ENCODE measurements at regions of chr11 and their contacts with region 1.

Region 1: DNA sequence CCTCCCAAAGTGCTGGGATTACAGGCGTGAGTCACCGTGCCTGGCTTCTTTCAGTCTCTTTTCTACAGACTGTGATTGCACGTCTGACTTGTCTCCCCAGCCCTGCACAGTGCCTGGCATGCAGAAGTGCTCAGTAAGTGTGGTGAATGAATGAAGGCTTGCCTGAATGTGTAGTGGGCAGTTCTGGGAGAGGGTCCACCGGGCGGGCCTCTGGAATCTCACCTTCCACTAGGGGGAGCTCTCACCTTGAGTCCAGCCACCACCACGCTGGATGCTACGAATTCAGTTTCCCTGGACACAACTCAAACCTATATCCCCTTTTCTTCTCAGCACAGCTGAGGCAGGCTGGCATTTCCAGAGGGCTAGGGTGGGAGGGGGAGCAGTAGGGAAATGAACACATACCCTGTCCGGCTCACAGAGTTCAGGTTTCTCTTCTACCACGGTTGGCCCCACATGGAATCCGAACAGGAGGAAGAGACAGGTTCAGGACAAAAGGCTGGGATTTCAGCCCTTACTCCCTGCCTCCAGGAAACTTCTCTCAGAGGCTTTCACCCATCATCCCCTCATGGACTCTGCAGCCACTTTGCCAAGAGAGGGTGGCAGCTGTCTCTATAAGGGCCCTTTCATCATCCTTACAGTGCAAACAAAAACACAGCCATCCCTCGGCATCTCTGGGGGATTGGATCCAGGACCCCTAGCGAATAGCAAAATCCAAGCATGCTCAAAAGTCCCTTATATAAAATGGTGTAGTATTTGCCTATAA is 86.8 kb downstream of the NECTIN1 start:
- DNase-seq: no peak
- H3K4me3 Mint-ChIP-seq: no peak overlapping the region
- H3K27ac Mint-ChIP-seq: no peak overlapping the region
- H3K4me1 Mint-ChIP-seq: no peaks in the 10 kb centered on the region
- H3K27me3 Mint-ChIP-seq: no peaks in the 10 kb centered on the region

Region 2: GRCh38 chr11:120108154-120108865 is 466.1 kb after region 1 on chr11:
- intact Hi-C with region 1: loop called (anchors 2 kb)
- DNase-seq: peak; percentile 30
- H3K4me3 Mint-ChIP-seq: no peak overlapping the region
- H3K27ac Mint-ChIP-seq: no peak overlapping the region
- H3K4me1 Mint-ChIP-seq: no peaks in the 10 kb centered on the region
- H3K27me3 Mint-ChIP-seq: peaks cover 3% of the 10 kb centered on the region